H1 (cell line): ENCODE measurements at regions of chr9 and their contacts with region 1.

Region 1: GRCh38 chr9:96667361-96667728 is 12.2 kb upstream of the PRXL2C start:
- DNase-seq: no peak
- H3K4me3 ChIP-seq: no peak overlapping the region
- H3K27ac ChIP-seq: no peak overlapping the region
- H3K4me1 ChIP-seq: no peaks in the 10 kb centered on the region
- H3K27me3 ChIP-seq: no peaks in the 10 kb centered on the region
- CTCF ChIP-seq: peak in 2 of 3 experiments; percentile 23 to 38; a peak in 2 of 4 replicates
- EP300 ChIP-seq: no peak
- POLR2A ChIP-seq: no peak
- RAD21 ChIP-seq: peak in 1 of 2 experiments; percentile 46; a peak in 3 of 4 replicates

Region 2: GRCh38 chr9:96441798-96442445 is 225.4 kb before region 1 on chr9:
- CTCF ChIA-PET with region 1: interaction called, 27 read pairs
- POLR2A ChIA-PET with region 1: no interaction called
- DNase-seq: no peak
- H3K4me3 ChIP-seq: no peak overlapping the region
- H3K27ac ChIP-seq: no peak overlapping the region
- H3K4me1 ChIP-seq: no peaks in the 10 kb centered on the region
- H3K27me3 ChIP-seq: no peaks in the 10 kb centered on the region
- CTCF ChIP-seq: peak in 2 of 3 experiments; percentile 61 to 70; a peak in 3 of 4 replicates
- EP300 ChIP-seq: no peak
- POLR2A ChIP-seq: no peak
- RAD21 ChIP-seq: peak; percentile 70 to 76

Region 3: DNA sequence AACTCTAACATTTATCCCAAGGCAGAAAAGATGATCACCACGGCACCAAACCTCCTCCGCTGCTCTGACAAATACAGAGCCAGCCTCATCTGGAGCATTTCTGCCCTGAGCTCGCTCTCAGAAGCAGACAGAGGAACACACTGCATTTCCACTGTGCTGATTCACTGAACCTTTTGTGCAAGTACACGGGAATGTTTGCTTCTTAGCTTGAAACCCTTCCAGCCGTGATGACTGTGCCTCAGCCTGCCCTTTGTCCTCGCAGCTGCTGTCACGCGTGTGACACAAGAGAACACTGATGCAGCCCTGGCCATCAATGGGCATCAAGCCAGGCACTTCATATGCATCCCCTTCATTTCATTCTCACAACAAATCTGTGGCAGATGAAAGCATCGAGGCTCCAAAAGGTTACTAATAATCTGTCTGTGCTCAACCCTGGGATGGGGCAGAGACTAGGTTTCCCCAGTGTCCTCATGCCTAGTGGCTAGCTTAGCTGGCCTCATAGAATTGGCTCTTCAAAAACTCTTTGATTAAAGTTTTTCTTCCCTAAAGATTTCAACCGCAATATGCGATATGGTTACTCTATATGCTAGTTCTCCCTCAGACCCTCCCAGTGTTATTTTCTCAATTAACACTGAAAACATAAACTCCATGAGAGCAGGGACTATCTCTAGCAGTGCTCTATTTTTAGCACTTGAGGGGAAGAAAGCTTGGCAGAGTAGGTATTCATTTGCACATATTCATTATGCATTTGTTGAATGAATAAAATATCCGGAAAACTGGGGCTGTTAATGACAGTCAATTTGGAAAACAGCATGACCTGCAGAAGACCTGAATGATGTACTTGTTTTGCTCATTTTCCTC is 55.0 kb before region 1 on chr9:
- CTCF ChIA-PET with region 1: interaction called, 10 read pairs
- POLR2A ChIA-PET with region 1: no interaction called
- DNase-seq: no peak
- H3K4me3 ChIP-seq: 0 out of 8 replicates have a peak overlapping the region, but pooled peaks of 1 of the 4 experiments have one; percentile 6
- H3K27ac ChIP-seq: 0 out of 2 replicates have a peak overlapping the region, but pooled peaks have one; percentile 28
- H3K4me1 ChIP-seq: peaks cover 5 to 16% (median 6%) of the 10 kb centered on the region in 4 experiments
- H3K27me3 ChIP-seq: no peaks in the 10 kb centered on the region
- CTCF ChIP-seq: no peak
- EP300 ChIP-seq: no peak
- POLR2A ChIP-seq: no peak
- RAD21 ChIP-seq: no peak

Region 4: DNA sequence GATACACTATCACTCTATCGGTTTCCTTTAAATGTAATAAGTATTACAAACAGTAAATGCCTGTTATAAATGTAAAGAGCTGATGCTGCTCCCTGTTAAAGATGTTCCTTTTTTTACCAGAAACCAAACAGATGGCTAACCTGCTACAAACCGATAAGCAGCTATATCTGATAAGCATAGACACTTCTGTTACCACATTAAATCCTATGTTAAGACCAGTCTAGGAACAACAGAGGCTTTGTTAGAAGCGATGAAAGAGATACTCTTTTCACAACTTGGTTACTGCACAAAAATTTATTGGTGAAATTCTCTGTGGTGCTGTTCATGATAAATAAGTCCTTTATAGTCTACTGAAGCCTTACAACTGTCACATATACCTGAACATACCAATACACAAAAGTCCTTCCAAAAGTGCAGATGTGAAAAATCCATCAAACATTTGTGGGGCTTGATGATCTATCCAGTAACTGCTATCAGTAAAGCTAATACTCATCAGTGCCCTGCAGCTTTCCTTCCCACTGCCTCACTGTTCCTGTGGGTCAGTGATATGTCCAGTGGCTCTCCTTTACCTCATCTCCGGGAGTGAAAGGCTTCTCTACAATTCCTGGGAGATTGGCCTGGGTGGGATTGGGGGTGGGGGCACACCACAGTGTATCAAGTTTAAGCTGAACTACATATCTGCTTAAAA is 13.6 kb after region 1 on chr9:
- CTCF ChIA-PET with region 1: interaction called, 12 read pairs
- POLR2A ChIA-PET with region 1: no interaction called
- DNase-seq: no peak
- H3K4me3 ChIP-seq: no peak overlapping the region
- H3K27ac ChIP-seq: no peak overlapping the region
- H3K4me1 ChIP-seq: no peaks in the 10 kb centered on the region
- H3K27me3 ChIP-seq: no peaks in the 10 kb centered on the region
- CTCF ChIP-seq: no peak
- EP300 ChIP-seq: no peak
- POLR2A ChIP-seq: no peak
- RAD21 ChIP-seq: no peak